Vagina (tissue), 2 donors: ENCODE measurements at regions of chr11 and their contacts with region 1.

Region 1: DNA sequence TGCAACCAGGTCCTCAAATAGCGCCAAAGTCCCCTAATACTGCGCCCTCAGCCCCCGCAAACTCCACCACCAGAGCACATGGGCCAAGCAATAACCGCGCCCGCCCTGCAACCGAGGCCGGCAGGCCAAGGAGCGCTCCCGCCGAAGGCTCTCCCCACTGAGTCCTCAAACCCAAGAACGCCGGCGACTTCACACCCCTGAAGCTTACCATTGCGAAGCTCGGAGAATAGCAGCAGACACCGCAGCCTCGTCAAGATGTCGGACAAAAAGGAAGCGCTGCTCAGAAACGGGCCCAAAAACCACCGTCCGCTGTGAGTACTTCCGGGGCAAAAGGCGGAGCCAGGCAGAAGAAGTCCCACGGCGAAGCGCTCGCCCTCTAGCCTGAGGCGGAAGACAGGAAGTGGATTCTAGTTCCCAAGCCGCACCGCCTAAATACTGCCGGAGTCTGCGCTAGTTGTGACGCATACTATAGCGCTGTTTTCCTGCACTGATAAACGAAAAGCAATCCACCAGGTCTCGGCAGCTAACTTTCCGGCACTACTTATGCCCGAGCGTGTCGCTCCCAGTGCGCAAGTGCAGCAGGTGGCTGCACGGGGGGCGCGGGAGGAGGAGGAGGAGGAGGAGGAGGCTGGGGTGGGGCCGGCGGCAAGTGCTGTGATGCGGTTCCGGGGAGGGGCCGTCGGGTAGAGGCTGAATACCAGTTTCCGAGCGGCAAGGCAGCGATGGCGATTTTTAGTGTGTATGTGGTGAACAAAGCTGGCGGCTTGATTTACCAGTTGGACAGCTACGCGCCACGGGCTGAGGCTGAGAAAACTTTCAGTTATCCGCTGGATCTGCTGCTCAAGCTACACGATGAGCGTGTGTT is at the starts of genes RPS25 and TRAPPC4:
- DNase-seq: peak in 1 of 2 donors; percentile 97
- H3K4me3 ChIP-seq: peak within 1 kb of the TSS; percentile 82 to 94
- H3K27ac ChIP-seq: peak within 1 kb of the TSS; percentile 89
- H3K4me1 ChIP-seq: peaks cover 53% of the 10 kb centered on the region
- H3K27me3 ChIP-seq: no peaks in the 10 kb centered on the region
- CTCF ChIP-seq: no peak
- POLR2A ChIP-seq: peak in 1 of 2 donors; percentile 68
- total RNA-seq, gene RPS25: 1,843 TPM
- total RNA-seq, gene TRAPPC4: 40.0 TPM

Region 2: DNA sequence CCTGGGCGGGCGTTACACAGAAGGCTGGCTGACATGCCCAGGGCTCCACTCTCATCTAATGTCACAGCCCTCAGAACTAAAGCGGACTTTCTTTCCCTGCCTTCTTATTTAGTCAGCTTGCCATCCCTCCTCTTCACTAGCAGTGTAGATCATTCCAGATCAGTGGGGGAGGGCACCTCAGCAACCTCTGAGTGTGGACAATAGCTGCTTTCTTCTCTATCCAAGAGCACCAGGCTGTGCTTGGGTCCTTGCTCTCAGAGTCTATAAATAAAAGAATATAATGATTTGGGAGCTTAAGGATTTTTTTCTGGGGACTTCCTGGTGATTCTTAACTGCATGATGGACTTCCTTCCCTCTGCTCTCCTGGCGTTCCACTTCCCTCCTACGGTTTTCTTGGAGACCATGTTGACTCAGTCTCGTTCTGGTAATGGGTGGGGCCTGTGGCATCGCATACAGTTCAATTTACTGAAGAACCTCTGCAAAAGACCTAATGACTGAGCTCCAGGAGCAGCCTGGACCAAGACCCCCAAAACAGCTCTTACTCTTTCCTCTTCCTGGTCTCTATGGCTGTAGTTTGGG is 63.5 kb after region 1 on chr11:
- intact Hi-C with region 1: loop called (anchors 1 kb)
- DNase-seq: no peak
- H3K4me3 ChIP-seq: no peak overlapping the region
- H3K27ac ChIP-seq: no peak overlapping the region
- H3K4me1 ChIP-seq: peaks cover 16% of the 10 kb centered on the region
- H3K27me3 ChIP-seq: no peaks in the 10 kb centered on the region
- CTCF ChIP-seq: no peak
- POLR2A ChIP-seq: no peak